ENCODE measurements at regions of chr17 and their contacts with region 1.

Region 1: DNA sequence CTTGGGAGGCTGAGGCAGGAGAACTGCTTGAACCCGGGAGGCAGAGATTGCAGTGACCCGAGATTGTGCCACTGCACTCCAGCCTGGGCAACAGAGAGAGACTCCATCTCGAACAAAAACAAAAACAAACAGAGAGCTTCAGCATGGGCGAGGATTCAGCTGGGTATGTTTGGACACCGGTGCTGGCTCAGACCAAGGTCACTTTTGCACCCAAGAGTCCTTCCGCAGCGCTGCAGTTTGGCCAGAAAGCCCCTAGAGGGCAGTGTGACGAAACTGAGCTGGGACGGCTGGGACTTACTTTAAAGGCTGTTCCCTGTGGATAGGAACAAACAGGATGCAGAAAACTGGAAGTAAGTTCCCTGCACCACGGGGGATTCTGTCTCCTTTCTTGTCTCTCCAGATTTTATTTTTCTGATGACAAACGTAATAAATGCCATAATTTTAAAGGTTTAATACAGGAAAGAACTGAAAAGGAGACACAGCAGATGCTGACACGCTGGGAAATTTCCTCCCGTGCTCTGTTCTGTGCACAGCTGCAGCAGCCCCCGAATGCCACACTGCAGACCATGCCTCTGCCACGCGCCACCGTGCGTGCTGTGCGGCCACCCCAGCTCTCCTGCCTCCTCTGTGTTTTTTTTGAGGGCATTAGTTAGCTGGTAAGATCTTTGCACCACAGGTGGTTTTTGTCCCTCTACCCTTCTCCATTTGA is 25.2 kb upstream of the USP36 start:
- DNase-seq: peak; percentile 80
- ATAC-seq: peak; percentile 80 to 87
- H3K4me3 ChIP-seq: peak overlapping the region; percentile 28
- H3K27ac ChIP-seq: no peak overlapping the region
- H3K4me1 ChIP-seq: peaks cover 21% of the 10 kb centered on the region
- H3K27me3 ChIP-seq: no peaks in the 10 kb centered on the region
- CTCF ChIP-seq: peak; percentile 92

Region 2: DNA sequence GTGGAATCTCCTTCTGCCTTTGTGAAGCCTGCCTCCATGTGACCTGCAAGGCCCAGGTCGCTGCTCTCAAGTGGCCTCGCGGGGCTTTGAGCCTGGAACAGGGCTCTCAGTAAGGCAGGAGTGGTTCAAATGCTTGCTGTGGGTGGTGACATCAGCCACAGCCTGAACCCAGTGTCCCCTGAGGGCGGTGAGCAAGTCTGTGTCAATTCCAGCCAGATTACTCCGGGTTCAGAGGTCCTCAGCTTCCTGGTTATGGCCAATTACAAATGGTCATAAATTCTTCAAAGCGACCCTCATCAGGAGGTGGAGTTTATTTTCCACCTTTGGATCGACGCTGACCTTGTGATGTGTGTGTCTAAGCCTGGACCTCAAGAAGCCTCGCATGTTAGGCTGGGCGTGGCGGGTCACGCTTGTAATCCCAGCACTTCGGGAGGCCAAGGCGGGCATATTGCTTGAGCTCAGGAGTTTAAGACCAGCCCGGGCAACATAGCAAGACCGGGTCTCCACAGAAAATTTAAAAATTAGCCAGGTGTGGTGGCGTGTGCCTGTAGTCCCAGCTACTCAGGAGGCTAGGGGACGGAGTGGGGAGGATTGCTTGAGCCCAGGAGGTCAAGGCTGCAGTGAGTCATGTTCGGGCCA is 96.6 kb after region 1 on chr17:
- intact Hi-C with region 1: loop called (anchors 10 kb)
- DNase-seq: no peak
- ATAC-seq: peak; percentile 18 to 49
- H3K4me3 ChIP-seq: no peak overlapping the region
- H3K27ac ChIP-seq: no peak overlapping the region
- H3K4me1 ChIP-seq: peaks cover 10% of the 10 kb centered on the region
- H3K27me3 ChIP-seq: no peaks in the 10 kb centered on the region
- CTCF ChIP-seq: no peak

Region 3: GRCh38 chr17:79074650-79075445 is 209.0 kb after region 1 on chr17 and contains the start of gene ENGASE:
- intact Hi-C with region 1: no loop called
- DNase-seq: peak; percentile 97
- ATAC-seq: peak; percentile 99
- H3K4me3 ChIP-seq: peak within 1 kb of the TSS; percentile 79
- H3K27ac ChIP-seq: peak within 1 kb of the TSS; percentile 87
- H3K4me1 ChIP-seq: peaks cover 22% of the 10 kb centered on the region
- H3K27me3 ChIP-seq: no peaks in the 10 kb centered on the region
- CTCF ChIP-seq: no peak
- total RNA-seq, gene ENGASE: 56.4 TPM

Measured in lower lobe of right lung (tissue), 2 donors.